Activated B cell treated with CpG ODN at 0.5 μM for 24 hours (primary cell): ENCODE measurements at regions of chr7 and their contacts with region 1.

Region 1: GRCh38 chr7:17298207-17298839 is at the start of gene AHR:
- DNase-seq: no peak
- ATAC-seq: peak; percentile 80
- H3K4me3 Mint-ChIP-seq: peak within 1 kb of the TSS; percentile 86
- H3K27ac Mint-ChIP-seq: peak within 1 kb of the TSS; percentile 86
- H3K4me1 Mint-ChIP-seq: peaks cover 38% of the 10 kb centered on the region
- H3K27me3 Mint-ChIP-seq: no peaks in the 10 kb centered on the region
- CTCF ChIP-seq: no peak
- total RNA-seq, gene AHR: 21.4 and 24.4 TPM in 2 replicates

Region 2: DNA sequence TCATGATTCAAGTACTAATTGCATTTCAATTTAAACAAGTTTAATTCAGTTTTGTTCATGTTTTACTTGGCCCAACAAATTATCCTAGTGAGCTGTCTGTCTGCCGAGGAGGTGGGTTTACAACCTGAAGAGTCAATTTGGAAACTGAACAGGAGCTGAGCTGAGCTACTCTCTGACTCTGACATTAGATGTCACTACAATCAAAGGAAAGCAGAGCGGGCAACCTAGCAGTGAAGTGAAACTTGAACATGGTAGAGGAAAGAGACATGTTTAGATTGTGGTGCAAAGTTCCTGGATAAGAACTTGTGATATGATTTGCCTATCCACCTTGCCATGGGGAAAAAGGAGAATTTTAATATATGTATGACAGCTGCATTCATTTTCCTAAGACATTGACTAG is 407.0 kb before region 1 on chr7:
- CTCF ChIA-PET with region 1: no interaction called
- POLR2A ChIA-PET with region 1: no interaction called
- intact Hi-C with region 1: loop called (anchors 5 kb)
- DNase-seq: no peak
- ATAC-seq: peak; percentile 45
- H3K4me3 Mint-ChIP-seq: no peak overlapping the region
- H3K27ac Mint-ChIP-seq: no peak overlapping the region
- H3K4me1 Mint-ChIP-seq: peaks cover 4% of the 10 kb centered on the region
- H3K27me3 Mint-ChIP-seq: no peaks in the 10 kb centered on the region
- CTCF ChIP-seq: no peak

Region 3: DNA sequence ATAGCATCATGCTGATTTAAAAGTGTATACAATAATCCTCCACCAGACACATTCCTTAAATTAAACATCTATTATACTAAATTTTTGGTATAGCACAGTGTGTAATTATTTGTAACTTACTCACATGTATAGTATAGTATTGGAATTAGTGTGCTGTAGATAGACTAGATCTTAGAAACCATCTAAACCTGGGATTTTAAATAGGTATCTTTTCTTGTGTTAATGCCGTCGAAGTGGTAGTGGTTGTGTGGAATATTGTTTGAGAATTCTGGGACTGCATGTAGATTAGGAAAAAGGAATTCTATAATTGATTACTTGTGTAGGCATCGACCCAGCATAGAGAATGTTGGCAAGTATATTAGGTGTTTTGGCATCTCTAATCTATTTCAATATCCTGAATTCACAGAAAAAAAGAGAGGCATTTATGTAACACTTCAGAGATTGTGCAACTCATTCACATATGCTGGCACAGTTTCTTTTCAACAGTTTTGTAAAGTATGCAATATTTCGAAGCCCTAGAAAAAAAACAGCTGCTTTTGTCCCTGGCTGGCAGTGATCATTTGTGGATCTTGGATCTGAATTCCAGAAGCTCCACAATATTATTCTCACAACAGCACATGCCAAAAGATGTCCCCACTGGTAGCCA is 271.1 kb before region 1 on chr7:
- CTCF ChIA-PET with region 1: no interaction called
- POLR2A ChIA-PET with region 1: no interaction called
- intact Hi-C with region 1: no loop called
- DNase-seq: no peak
- ATAC-seq: no peak
- H3K4me3 Mint-ChIP-seq: no peak overlapping the region
- H3K27ac Mint-ChIP-seq: no peak overlapping the region
- H3K4me1 Mint-ChIP-seq: peaks cover 7% of the 10 kb centered on the region
- H3K27me3 Mint-ChIP-seq: no peaks in the 10 kb centered on the region
- CTCF ChIP-seq: no peak

Region 4: DNA sequence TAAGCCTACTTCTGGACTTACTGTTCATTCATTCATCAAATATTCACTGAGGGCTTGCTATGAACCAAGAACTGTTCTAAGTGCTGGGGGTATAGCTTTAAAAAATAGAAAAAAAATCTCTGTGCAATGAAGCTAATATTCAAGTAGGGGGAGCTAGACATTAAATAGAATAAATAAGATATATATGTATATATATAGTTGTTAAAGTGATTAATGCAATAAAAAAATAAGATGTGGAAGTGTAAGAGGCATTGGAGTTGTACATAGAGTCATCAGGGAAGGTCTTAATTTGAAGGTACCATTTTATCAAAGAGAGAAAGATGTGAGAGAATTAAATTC is 235.3 kb before region 1 on chr7:
- CTCF ChIA-PET with region 1: interaction called, 16 read pairs
- POLR2A ChIA-PET with region 1: interaction called, 3 read pairs
- intact Hi-C with region 1: loop called (anchors 1 kb)
- DNase-seq: no peak
- ATAC-seq: no peak
- H3K4me3 Mint-ChIP-seq: no peak overlapping the region
- H3K27ac Mint-ChIP-seq: no peak overlapping the region
- H3K4me1 Mint-ChIP-seq: peaks cover 14% of the 10 kb centered on the region
- H3K27me3 Mint-ChIP-seq: no peaks in the 10 kb centered on the region
- CTCF ChIP-seq: no peak

Region 5: GRCh38 chr7:17402628-17403278 is 104.4 kb after region 1 on chr7:
- CTCF ChIA-PET with region 1: no interaction called
- POLR2A ChIA-PET with region 1: no interaction called
- intact Hi-C with region 1: loop called (anchors 2 kb)
- DNase-seq: no peak
- ATAC-seq: no peak
- H3K4me3 Mint-ChIP-seq: peak overlapping the region; percentile 60
- H3K27ac Mint-ChIP-seq: peak overlapping the region; percentile 78
- H3K4me1 Mint-ChIP-seq: peaks cover 22% of the 10 kb centered on the region
- H3K27me3 Mint-ChIP-seq: no peaks in the 10 kb centered on the region
- CTCF ChIP-seq: no peak

Region 6: DNA sequence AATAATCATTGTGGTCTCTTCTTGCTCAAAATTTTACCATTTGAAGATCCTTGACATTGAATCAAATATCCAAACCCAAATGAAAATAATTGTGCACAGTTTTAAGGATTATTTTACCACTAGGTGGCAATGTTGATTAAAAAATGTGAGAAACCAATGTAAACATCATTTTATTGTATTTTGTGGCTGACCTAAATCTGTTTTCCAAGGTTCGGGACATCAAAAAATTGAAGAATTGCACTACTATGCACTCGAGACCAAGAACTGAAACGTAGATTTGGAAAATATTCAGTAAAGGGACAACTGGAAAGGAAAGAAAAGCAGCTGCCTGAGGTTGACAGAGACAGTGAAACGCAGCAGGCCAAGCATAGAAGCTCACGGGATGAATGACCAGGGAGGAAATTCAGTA is 382.6 kb after region 1 on chr7:
- CTCF ChIA-PET with region 1: interaction called, 15 read pairs
- POLR2A ChIA-PET with region 1: interaction called, 5 read pairs
- intact Hi-C with region 1: loop called (anchors 2 kb)
- DNase-seq: no peak
- ATAC-seq: no peak
- H3K4me3 Mint-ChIP-seq: no peak overlapping the region
- H3K27ac Mint-ChIP-seq: no peak overlapping the region
- H3K4me1 Mint-ChIP-seq: no peaks in the 10 kb centered on the region
- H3K27me3 Mint-ChIP-seq: no peaks in the 10 kb centered on the region
- CTCF ChIP-seq: no peak